HepG2 (cell line): ENCODE measurements at regions of chr5 and their contacts with region 1.

Region 1: DNA sequence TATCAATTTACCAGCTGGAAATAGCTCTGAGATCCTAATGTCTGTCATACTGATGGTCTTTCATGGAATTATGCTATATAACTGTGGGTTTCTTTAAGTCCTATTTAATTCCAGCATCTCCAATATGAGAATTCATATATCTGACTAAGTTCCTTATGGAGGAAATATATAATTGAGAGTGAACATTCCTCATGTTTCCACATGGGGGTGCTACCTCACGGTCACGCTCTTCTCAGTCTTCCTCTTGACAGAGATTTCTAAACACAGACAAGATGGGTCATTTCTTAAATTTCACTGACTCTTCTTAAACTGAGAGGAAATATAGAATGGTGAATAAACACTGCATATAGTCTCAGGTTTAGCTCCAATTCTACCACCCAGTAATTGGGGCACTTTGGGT is 212.1 kb downstream of the SLF1 start:
- DNase-seq: no peak
- ATAC-seq: peak; percentile 50; the same call in 1 of the 3 replicates
- H3K4me3 ChIP-seq: no peak overlapping the region
- H3K27ac ChIP-seq: no peak overlapping the region
- H3K4me1 ChIP-seq: no peaks in the 10 kb centered on the region
- H3K27me3 ChIP-seq: no peaks in the 10 kb centered on the region
- CTCF ChIP-seq: peak; percentile 43
- EP300 ChIP-seq: no peak
- POLR2A ChIP-seq: no peak
- RAD21 ChIP-seq: no peak

Region 2: DNA sequence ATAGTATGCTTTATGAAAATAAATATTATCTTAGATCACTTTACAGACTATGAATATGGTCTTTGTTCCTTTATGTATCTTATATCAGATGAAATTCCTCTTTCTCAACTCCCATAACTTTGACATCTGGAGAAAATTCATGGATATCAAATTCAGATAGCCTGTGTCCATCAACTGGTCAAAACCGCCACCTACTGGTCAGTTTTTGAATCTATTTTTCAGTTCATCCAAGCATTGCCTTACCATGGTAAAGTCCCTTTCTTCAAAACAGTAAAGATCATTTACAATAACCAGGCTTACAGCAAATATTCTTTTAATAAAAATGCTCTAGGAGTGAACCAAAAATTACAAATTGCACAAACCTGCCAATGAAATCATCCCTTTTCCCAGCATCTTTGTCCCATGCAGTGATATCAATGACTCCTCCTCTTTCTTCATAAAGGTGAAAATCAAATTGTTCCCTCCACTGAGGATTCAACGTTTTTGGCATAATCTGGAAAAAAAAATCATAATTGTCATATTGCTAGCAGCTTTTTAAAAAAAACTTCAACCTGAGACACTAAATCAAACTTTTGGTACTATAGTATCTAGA is 78.5 kb after region 1 on chr5:
- CTCF ChIA-PET with region 1: interaction called, 4 read pairs
- POLR2A ChIA-PET with region 1: no interaction called
- in situ Hi-C with region 1: no loop called
- intact Hi-C with region 1: loop called (anchors 2 kb)
- DNase-seq: peak; percentile 25
- ATAC-seq: peak; percentile 65
- H3K4me3 ChIP-seq: no peak overlapping the region
- H3K27ac ChIP-seq: no peak overlapping the region
- H3K4me1 ChIP-seq: no peaks in the 10 kb centered on the region
- H3K27me3 ChIP-seq: no peaks in the 10 kb centered on the region
- CTCF ChIP-seq: peak; percentile 64
- EP300 ChIP-seq: no peak
- POLR2A ChIP-seq: no peak
- RAD21 ChIP-seq: no peak

Region 3: GRCh38 chr5:95057615-95058014 is 227.1 kb after region 1 on chr5:
- CTCF ChIA-PET with region 1: no interaction called
- POLR2A ChIA-PET with region 1: no interaction called
- in situ Hi-C with region 1: no loop called
- intact Hi-C with region 1: no loop called
- DNase-seq: no peak
- ATAC-seq: no peak
- H3K4me3 ChIP-seq: no peak overlapping the region
- H3K27ac ChIP-seq: no peak overlapping the region
- H3K4me1 ChIP-seq: no peaks in the 10 kb centered on the region
- H3K27me3 ChIP-seq: no peaks in the 10 kb centered on the region
- CTCF ChIP-seq: no peak
- EP300 ChIP-seq: no peak
- POLR2A ChIP-seq: no peak
- RAD21 ChIP-seq: no peak